GM18951 (cell line): ENCODE measurements at regions of chr12 and their contacts with region 1.

Region 1: GRCh38 chr12:77065361-77066204 is at the start of gene E2F7:
- POLR2A ChIP-seq: peak; percentile 93

Region 2: DNA sequence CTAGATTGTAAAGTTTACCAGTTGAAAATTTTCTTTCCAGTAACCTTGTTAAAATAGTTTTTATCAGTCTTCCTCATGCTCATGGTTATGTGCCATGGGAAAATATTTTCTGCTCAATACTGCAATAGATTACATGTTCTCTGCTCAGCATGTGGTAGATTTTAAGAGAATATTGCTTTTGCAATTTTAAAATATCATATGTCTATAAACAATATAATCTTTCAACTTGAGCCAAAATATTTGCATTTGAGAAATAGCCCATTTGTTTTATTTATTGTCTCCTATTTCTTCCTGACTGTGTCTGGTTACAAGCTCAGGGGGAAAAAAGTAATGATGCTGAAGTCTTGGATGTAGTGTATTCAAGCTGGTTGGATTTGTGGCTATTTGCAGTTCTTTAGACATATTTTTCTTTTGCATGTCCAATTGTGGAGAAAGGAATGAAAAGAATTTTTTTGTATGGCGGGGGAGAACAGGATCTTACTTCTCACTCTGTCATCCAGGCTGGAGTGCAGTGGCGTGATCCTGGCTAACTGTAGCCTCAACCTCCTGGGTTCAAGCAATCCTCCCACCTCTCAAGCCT is 422.5 kb after region 1 on chr12:
- in situ Hi-C with region 1: no loop called
- POLR2A ChIP-seq: no peak

Region 3: GRCh38 chr12:77685112-77685511 is 619.5 kb after region 1 on chr12:
- in situ Hi-C with region 1: loop called (anchors 25 kb)
- POLR2A ChIP-seq: no peak